ENCODE measurements at regions of chr4 and their contacts with region 1.

Region 1: DNA sequence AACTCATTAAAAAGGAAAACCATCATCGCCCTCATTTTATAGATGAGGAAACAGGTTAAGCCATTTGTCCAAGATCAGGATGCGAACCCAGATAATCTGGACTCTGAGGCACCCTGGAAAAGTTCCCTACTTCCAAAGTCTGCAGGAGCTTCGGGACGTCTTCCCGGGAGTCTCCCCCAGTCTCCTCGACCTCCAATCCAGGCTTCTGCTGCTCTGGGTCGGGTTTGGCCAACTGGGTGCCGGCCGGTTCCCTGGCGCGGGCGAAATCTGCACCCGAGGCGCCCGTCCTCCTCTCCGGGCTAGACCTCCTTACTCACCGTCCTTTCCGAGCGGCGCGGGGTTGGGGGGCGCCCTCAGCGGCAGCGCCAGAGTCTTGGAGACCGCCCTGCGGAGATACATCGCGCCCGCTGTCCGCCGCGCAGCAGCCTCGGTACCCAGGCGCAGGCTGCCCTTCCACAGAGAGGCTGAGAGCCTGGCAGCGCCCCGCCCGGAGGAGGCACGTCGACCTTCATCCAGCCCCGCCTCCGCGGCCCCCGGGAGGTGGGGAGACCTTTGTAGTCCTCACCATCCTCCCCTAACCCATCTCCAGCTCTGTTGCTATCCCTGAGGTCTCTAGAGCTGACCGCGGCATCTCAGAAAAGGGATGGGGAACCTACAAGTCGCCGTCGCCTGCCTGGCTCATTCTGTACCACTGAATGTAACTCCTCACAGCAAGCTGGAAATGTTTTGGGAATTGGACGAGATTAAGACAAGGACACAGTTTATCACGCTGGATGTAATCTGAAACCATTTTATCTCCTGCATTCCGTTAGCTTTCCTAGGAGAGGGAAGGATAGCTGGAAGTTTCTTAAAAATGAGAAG is at the start of gene MGARP:
- DNase-seq: no peak
- H3K4me3 ChIP-seq: peak within 1 kb of the TSS; percentile 53 to 62 (median 58)
- H3K27ac ChIP-seq: peak within 1 kb of the TSS in 2 of 4 donors; percentile 9 to 65
- H3K4me1 ChIP-seq: peaks cover 0 to 17% (median 16%) of the 10 kb centered on the region in 4 donors
- H3K27me3 ChIP-seq: peaks cover 0 to 3% (median 0%) of the 10 kb centered on the region in 4 donors
- CTCF ChIP-seq: no peak
- EP300 ChIP-seq: no peak
- POLR2A ChIP-seq: no peak
- total RNA-seq, gene MGARP: 2.0 to 4.3 (median 3.4) TPM

Region 2: GRCh38 chr4:139177868-139178611 is 102.0 kb before region 1 on chr4:
- intact Hi-C with region 1: no loop called
- DNase-seq: peak; percentile 98
- H3K4me3 ChIP-seq: peak overlapping the region; percentile 98 to 99 (median 99)
- H3K27ac ChIP-seq: peak overlapping the region; percentile 100
- H3K4me1 ChIP-seq: peaks cover 13 to 35% (median 31%) of the 10 kb centered on the region in 4 donors
- H3K27me3 ChIP-seq: no peaks in the 10 kb centered on the region
- CTCF ChIP-seq: no peak
- EP300 ChIP-seq: peak; percentile 65
- POLR2A ChIP-seq: peak; percentile 86

Region 3: GRCh38 chr4:139239127-139239772 is 40.7 kb before region 1 on chr4:
- intact Hi-C with region 1: loop called (anchors 5 kb)
- DNase-seq: no peak
- H3K4me3 ChIP-seq: no peak overlapping the region
- H3K27ac ChIP-seq: no peak overlapping the region
- H3K4me1 ChIP-seq: peaks cover 0 to 16% (median 12%) of the 10 kb centered on the region in 4 donors
- H3K27me3 ChIP-seq: no peaks in the 10 kb centered on the region
- CTCF ChIP-seq: no peak
- EP300 ChIP-seq: no peak
- POLR2A ChIP-seq: no peak

Region 4: GRCh38 chr4:139441029-139441428 is 161.0 kb after region 1 on chr4:
- intact Hi-C with region 1: no loop called
- DNase-seq: no peak
- H3K4me3 ChIP-seq: no peak overlapping the region
- H3K27ac ChIP-seq: no peak overlapping the region
- H3K4me1 ChIP-seq: no peaks in the 10 kb centered on the region
- H3K27me3 ChIP-seq: no peaks in the 10 kb centered on the region
- CTCF ChIP-seq: no peak
- EP300 ChIP-seq: no peak
- POLR2A ChIP-seq: no peak